ENCODE measurements at regions of chr15 and their contacts with region 1.

Region 1: DNA sequence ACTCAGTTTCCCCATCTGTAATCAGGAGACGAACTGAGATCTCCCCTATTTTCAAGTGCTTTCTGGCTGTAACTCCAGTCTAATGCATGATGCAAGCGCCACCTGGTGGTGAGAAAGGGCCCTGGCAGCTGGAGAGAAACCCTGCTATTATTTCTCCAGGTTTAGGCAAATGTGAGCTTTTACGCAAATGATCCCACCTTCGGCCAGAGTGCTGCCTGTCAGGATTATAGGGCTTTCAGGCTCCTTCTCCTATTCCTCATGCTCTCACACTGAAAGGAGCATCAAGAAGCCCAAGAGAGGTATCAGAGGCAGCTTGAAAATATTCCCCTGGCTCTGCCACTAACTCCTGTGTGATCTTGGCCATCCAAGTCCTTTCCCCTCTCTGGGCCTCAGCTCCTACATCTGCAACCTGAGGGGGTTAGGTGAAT is 93.9 kb upstream of the RASGRF1 start:
- DNase-seq: peak; percentile 42
- ATAC-seq: peak; percentile 78; the same call in 1 of the 2 replicates
- H3K4me3 ChIP-seq: no peak overlapping the region
- H3K27ac ChIP-seq: peak overlapping the region; percentile 62
- H3K4me1 ChIP-seq: peaks cover 12% of the 10 kb centered on the region
- H3K27me3 ChIP-seq: no peaks in the 10 kb centered on the region
- CTCF ChIP-seq: peak; percentile 95

Region 2: DNA sequence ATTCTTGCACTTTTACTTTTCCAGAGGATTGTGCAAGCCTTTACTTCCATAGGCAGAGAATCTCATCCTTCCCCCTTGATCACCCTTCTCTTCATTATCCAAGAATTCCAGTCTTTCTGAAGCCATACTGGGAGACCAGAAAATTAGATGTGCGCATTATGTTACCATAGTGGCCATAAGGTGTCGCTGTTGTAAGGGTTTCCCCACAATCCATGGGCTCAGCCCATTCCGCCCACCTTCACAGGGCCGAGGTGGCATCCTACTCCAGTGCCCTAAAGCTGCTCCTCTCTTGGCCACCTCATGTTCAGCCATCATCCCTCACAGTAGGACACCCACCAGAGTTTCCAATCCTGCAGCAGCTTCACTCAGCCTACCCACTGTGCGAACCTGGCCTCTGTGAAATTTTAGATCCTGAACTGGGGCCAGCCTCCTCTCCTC is 274.7 kb before region 1 on chr15:
- CTCF ChIA-PET with region 1: no interaction called
- POLR2A ChIA-PET with region 1: no interaction called
- in situ Hi-C with region 1: no loop called
- intact Hi-C with region 1: loop called (anchors 5 kb)
- DNase-seq: no peak
- ATAC-seq: peak; percentile 80
- H3K4me3 ChIP-seq: no peak overlapping the region
- H3K27ac ChIP-seq: no peak overlapping the region
- H3K4me1 ChIP-seq: peaks cover 3% of the 10 kb centered on the region; the same call in 1 of the 2 replicates
- H3K27me3 ChIP-seq: no peaks in the 10 kb centered on the region
- CTCF ChIP-seq: peak; percentile 86

Region 3: DNA sequence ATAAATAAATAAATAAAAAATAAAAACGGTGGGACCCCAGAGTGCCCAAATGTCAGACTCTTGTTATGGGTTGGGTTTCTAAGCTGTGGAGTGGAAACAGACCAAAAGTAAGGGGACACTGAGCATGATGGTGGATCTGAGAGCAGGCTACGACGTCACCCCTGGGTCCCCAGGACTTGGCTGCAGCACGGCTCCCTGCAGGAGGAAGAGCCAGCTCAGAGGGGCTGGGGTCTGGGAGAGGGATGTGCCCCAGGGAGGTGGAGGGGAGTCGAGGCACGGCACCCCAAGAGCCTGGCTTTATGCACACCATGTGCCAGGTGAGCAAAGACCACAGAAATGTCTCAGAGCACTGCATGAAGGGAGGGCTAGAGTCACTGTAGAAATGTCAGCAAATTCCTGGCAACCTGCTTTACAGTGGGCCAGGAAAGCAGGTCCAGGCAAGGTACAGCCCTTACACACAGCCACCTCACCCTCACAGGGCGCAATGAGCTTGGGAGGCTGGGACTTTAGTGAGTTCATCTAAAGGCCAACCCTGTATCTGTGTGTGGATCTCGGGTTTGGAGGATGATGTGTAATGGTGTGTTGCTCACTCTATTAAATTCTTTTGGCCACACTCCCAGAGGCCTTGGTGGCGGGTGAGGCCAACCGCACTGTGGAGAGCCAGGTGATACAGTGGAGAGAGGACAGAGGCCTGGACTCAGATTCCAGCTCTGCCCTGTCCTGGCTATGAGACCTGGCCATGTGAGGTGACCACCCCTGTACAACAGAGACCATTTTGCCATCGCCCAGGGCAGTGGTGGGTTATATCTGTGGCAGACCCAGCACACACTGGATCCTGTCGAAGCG is 253.7 kb before region 1 on chr15:
- CTCF ChIA-PET with region 1: no interaction called
- POLR2A ChIA-PET with region 1: no interaction called
- in situ Hi-C with region 1: no loop called
- intact Hi-C with region 1: loop called (anchors 5 kb)
- DNase-seq: peak; percentile 85
- ATAC-seq: peak; percentile 87
- H3K4me3 ChIP-seq: no peak overlapping the region
- H3K27ac ChIP-seq: peak overlapping the region; percentile 97
- H3K4me1 ChIP-seq: peaks cover 81% of the 10 kb centered on the region
- H3K27me3 ChIP-seq: no peaks in the 10 kb centered on the region
- CTCF ChIP-seq: no peak

Region 4: GRCh38 chr15:79028411-79028964 is 156.0 kb before region 1 on chr15:
- CTCF ChIA-PET with region 1: interaction called, 28 read pairs
- POLR2A ChIA-PET with region 1: no interaction called
- in situ Hi-C with region 1: no loop called
- intact Hi-C with region 1: loop called (anchors 1 kb)
- DNase-seq: peak; percentile 52
- ATAC-seq: peak; percentile 70
- H3K4me3 ChIP-seq: no peak overlapping the region
- H3K27ac ChIP-seq: peak overlapping the region; percentile 2; the same call in 1 of the 2 replicates
- H3K4me1 ChIP-seq: no peaks in the 10 kb centered on the region
- H3K27me3 ChIP-seq: no peaks in the 10 kb centered on the region
- CTCF ChIP-seq: peak; percentile 94

Region 5: DNA sequence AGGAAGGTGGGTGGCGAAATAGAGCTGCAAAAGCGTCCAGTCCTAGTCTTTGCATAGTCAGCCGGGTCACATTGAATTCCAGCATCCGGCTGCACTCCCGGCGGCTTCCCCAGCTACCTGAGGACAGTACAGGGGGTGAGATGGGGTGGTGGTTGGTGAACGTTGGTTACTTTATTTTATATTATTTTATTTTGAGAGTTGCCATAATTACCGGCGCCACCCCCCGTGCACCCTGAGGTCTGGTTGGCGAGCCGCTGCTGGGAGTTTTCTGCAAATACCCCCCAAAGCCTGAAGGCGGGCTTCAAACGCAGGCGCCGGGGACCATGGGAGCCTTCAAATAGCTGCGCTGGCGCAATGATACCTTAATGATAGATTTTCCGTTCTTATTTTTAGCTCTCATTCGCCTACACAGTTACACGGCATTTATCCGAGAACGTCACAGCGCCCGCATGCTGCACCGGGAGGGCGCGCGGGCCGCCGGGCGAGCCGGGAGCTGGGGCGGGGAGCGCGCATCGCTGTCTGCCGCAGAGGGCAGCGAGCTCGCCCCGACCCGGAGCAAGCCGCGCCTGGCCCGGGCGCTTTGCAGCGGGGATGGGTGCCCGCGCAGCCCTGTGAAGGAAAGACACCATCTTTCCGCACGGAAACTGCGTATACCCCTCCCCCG is 93.1 kb before region 1 on chr15:
- CTCF ChIA-PET with region 1: no interaction called
- POLR2A ChIA-PET with region 1: no interaction called
- in situ Hi-C with region 1: no loop called
- intact Hi-C with region 1: no loop called
- DNase-seq: no peak
- ATAC-seq: peak; percentile 87
- H3K4me3 ChIP-seq: peak overlapping the region; percentile 35 to 44
- H3K27ac ChIP-seq: no peak overlapping the region
- H3K4me1 ChIP-seq: peaks cover 11% of the 10 kb centered on the region
- H3K27me3 ChIP-seq: peaks cover 14% of the 10 kb centered on the region
- CTCF ChIP-seq: no peak

Region 6: GRCh38 chr15:79494963-79495746 is 310.7 kb after region 1 on chr15:
- CTCF ChIA-PET with region 1: no interaction called
- POLR2A ChIA-PET with region 1: no interaction called
- in situ Hi-C with region 1: no loop called
- intact Hi-C with region 1: no loop called
- DNase-seq: no peak
- ATAC-seq: no peak
- H3K4me3 ChIP-seq: no peak overlapping the region
- H3K27ac ChIP-seq: no peak overlapping the region
- H3K4me1 ChIP-seq: no peaks in the 10 kb centered on the region
- H3K27me3 ChIP-seq: peaks cover 15% of the 10 kb centered on the region
- CTCF ChIP-seq: no peak